ENCODE measurements at regions of chr22 and their contacts with region 1.

Region 1: DNA sequence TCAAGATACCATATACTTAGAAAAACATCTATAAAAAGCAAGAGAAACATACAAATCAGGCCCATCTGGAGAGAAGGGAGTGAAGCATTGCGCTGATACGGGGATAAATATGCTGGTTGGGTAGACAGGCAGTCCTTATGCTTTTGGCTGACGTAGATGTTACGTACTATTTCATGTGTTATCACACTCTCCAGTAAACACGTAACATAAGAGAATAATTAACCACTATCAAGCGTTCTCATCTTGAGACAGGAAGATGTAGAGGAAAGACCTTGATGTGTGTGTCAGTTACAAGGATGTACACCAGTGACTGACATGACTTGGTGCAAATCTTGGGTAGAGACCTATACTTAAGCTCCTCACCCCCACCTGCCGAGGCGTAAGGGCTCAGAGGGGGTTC is 86.7 kb upstream of the PRODH start:
- DNase-seq: no peak

Region 2: GRCh38 chr22:18905540-18906409 is 117.0 kb before region 1 on chr22 and contains the start of gene DGCR6:
- intact Hi-C with region 1: no loop called
- DNase-seq: no peak
- total RNA-seq, gene DGCR6: 1.0 to 3.5 TPM

Region 3: DNA sequence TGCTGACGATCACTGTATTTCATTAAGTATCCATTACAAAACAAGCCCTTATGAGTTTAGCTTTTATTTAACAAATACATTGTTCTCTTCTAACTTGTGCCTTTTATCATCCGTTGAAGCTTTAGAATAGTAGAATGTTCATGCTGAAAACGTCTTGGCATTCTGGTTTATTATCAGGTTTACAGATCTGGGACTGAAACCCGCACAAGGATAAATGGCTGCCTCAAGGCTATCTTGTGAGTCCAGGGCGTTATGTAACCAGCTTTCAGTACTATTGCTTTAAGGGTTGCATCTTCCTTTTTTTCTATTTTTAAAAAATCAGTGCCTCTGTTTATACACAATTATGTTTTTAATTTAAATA is 20.1 kb before region 1 on chr22:
- intact Hi-C with region 1: no loop called
- DNase-seq: no peak

Region 4: DNA sequence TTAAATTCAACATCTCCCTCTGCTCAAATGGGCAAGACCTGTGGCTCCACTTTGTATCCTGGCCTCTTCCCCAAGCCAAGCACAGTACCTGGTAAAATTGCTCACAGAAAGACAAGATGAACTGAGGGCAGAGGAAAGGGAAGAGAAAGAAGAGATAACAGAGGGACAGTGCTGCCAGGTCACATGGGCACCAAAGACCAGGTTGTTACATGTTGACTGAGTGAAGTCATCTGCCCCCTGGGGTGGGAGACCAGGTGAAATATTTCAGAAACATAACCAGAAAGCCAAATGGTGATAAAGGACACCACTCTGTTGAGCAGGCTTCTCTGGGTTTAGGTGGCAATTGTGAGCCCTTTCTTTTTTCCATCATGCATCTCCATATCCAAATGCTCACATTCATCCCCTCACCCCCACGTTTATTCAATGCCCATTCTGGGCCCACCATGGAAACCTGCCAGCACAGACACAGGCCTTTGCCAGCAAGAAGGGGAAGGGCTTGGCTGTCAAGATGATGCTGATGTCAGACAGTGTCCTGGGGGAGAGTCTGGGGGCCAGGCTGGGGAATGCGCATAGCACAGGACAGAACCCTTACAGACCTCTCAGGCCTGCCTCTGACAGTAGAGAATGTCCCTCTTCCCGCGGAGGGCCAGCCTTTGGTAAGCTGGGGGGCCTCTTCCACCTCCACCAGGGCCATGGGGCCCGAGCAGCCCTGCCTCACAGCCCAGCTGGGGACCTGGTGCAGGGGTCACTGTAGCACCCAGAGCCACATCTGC is 47.8 kb after region 1 on chr22:
- intact Hi-C with region 1: loop called in 1 of 2 experiments (anchors 2 kb)
- DNase-seq: no peak